SK-N-SH (cell line): ENCODE measurements at regions of chr10 and their contacts with region 1.

Region 1: GRCh38 chr10:72218325-72218724 is 2.2 kb upstream of the ASCC1 start:
- DNase-seq: no peak
- H3K4me3 ChIP-seq: no peak overlapping the region
- H3K27ac ChIP-seq: no peak overlapping the region
- H3K4me1 ChIP-seq: peaks cover 7 to 11% of the 10 kb centered on the region in 2 experiments; a peak in 2 of 4 replicates
- H3K27me3 ChIP-seq: no peaks in the 10 kb centered on the region
- CTCF ChIP-seq: no peak
- EP300 ChIP-seq: no peak
- RAD21 ChIP-seq: no peak

Region 2: GRCh38 chr10:72126184-72126871 is 92.0 kb before region 1 on chr10:
- CTCF ChIA-PET with region 1: interaction called, 17 read pairs
- POLR2A ChIA-PET with region 1: interaction called, 4 read pairs
- DNase-seq: peak; percentile 45
- H3K4me3 ChIP-seq: no peak overlapping the region
- H3K27ac ChIP-seq: no peak overlapping the region
- H3K4me1 ChIP-seq: peaks cover 0 to 6% of the 10 kb centered on the region in 2 experiments; a peak in 2 of 4 replicates
- H3K27me3 ChIP-seq: no peaks in the 10 kb centered on the region
- CTCF ChIP-seq: peak; percentile 56
- EP300 ChIP-seq: no peak
- RAD21 ChIP-seq: peak; percentile 76

Region 3: DNA sequence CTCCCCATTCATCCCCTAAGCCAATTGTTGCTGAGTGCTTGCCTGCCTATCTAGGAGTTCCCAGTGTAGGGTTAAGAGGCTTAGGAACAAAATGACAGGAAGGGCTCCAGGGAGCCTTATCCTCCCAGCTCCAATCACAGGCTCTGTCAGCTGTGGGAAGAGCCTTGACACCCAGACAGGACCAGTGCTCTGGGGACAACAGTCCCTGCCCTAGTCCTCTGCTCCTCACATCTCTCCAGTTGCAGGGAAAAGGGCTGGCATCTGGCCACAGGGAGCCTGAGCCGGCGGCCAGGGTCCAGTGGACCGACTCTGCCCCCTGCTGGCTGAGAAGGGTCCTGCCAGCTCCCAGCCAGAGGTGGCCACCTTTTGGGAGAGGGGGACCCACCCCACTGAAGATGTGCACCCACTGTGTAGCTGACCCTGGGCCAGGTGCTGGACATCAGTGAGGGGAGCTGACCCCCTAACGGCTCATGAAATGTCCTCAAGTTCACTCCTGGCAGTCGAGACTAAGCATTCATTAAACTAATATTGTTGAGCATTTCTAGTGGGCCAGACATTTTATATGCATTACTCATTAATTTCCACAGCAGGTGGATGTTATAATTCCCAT is 118.8 kb after region 1 on chr10:
- CTCF ChIA-PET with region 1: interaction called, 12 read pairs
- POLR2A ChIA-PET with region 1: no interaction called
- DNase-seq: peak; percentile 84
- H3K4me3 ChIP-seq: no peak overlapping the region; a peak in 1 of 4 replicates
- H3K27ac ChIP-seq: peak overlapping the region in 1 of 2 experiments; percentile 99; a peak in 2 of 4 replicates
- H3K4me1 ChIP-seq: peaks cover 3 to 51% of the 10 kb centered on the region in 2 experiments
- H3K27me3 ChIP-seq: no peaks in the 10 kb centered on the region
- CTCF ChIP-seq: peak; percentile 93
- EP300 ChIP-seq: no peak
- RAD21 ChIP-seq: peak; percentile 93